ENCODE measurements at regions of chr14 and their contacts with region 1.

Region 1: GRCh38 chr14:64220466-64220865 is 73.7 kb downstream of the ESR2 start:
- DNase-seq: peak; percentile 77
- ATAC-seq: peak; percentile 79

Region 2: GRCh38 chr14:64196814-64197411 is 23.6 kb before region 1 on chr14:
- intact Hi-C with region 1: loop called (anchors 1 kb)
- DNase-seq: no peak
- ATAC-seq: peak; percentile 77